ENCODE measurements at regions of chr18 and their contacts with region 1.

Region 1: GRCh38 chr18:23629444-23629946 is 33.2 kb downstream of the ANKRD29 start:
- DNase-seq: no peak

Region 2: DNA sequence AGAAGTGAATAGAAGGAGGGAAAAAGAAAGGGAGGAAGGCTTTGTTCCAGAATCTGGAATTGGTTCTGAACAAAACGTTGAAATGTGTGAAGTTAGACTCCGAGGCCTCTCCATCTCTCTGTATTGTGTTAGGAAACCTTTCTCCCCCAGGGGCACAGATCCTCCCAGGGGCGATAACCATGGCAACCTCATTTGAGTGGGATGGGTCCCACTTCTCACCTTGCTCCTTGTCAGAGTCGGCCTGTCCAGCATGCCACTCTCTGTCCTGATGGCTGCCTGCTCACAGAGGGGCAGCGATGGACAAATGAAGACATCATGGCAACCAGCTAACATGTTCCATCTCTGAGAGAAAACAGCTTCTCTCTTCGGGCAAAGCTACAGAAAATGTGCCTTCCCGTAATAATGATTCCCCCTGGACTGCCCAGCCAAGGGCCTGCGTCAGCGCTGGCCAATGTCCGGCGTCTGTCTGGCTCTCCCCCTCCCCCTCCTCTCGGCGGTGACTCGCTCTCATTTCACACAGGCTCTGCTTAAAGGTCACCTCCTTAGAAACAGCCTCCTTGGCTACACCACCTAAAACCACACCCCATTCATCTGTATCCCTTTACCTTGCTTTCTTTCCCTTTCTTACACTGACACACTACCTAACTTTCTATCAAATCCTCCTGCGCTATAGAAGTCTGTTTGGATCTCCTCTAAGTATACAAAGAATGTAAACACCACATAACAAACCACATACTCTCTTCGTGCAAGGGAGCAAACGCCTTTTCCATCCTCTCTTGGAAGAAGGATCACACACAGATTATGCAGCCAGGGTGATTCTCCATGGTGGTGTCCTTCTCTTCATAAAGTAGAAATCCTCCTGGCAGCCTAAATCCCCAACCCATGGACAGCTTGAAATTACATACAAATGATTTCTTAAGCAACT is 352.9 kb after region 1 on chr18:
- intact Hi-C with region 1: no loop called
- DNase-seq: peak in 1 of 10 donors; percentile 16

Region 3: GRCh38 chr18:24118750-24119577 is 489.5 kb after region 1 on chr18:
- intact Hi-C with region 1: loop called (anchors 10 kb)
- DNase-seq: peak in 9 of 10 donors; percentile 23 to 93 (median 64)